Activated CD8-positive, alpha-beta T cell treated with anti-CD3 and anti-CD28 coated beads, Interleukin-2, amount 10 ng/mL, durations not matched to agents 7 days and 5 days (primary cell): ENCODE measurements at regions of chr11 and their contacts with region 1.

Region 1: GRCh38 chr11:16785520-16786128 is 47.2 kb downstream of the C11orf58 start:
- DNase-seq: peak; percentile 64
- ATAC-seq: peak; percentile 83
- H3K4me3 Mint-ChIP-seq: no peak overlapping the region
- H3K27ac Mint-ChIP-seq: no peak overlapping the region
- H3K4me1 Mint-ChIP-seq: no peaks in the 10 kb centered on the region
- H3K27me3 Mint-ChIP-seq: no peaks in the 10 kb centered on the region

Region 2: GRCh38 chr11:16722581-16723344 is 62.9 kb before region 1 on chr11:
- CTCF ChIA-PET with region 1: no interaction called
- POLR2A ChIA-PET with region 1: no interaction called
- DNase-seq: no peak
- ATAC-seq: no peak
- H3K4me3 Mint-ChIP-seq: no peak overlapping the region
- H3K27ac Mint-ChIP-seq: no peak overlapping the region
- H3K4me1 Mint-ChIP-seq: no peaks in the 10 kb centered on the region
- H3K27me3 Mint-ChIP-seq: no peaks in the 10 kb centered on the region

Region 3: GRCh38 chr11:16773981-16774935 is 11.4 kb before region 1 on chr11:
- CTCF ChIA-PET with region 1: interaction called, 10 read pairs
- POLR2A ChIA-PET with region 1: no interaction called
- DNase-seq: no peak
- ATAC-seq: no peak
- H3K4me3 Mint-ChIP-seq: no peak overlapping the region
- H3K27ac Mint-ChIP-seq: no peak overlapping the region
- H3K4me1 Mint-ChIP-seq: no peaks in the 10 kb centered on the region
- H3K27me3 Mint-ChIP-seq: no peaks in the 10 kb centered on the region

Region 4: DNA sequence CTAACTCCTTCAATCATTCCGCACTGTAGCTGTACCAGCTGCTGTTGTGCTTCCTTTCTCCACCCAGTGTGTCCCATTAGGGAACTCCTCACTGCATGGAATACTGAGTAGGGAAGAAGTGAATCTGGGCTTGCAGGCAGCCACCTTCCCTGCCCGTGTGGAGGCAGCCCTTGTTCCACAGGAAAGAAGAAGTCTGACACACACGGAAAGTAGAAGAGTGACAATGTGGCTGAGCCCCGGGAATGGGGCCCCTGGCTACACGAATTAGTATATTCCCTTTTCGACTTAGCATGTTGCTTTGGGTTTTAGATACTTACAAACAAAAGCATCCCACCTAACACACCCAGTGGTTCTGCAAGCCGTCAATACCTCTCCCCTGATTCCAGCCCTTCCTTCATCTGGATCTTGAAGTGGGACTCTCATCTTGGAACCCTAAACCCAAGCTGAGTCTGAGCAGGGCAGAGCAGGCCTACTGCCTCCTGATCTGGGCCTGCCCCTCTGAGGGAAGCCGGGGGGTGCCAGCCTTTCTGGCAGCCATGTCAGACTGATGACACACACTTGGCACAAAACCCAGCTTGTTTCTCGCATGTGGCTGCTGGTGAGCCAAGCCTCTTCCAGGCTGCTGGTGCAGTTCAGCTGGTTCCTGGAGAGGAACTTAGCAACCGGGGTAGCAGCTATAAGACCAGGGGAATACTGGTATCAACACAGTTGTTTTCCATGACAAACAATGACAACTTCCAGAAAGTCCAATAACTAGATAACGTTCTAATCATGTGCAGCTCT is 24.5 kb after region 1 on chr11:
- CTCF ChIA-PET with region 1: interaction called, 17 read pairs
- POLR2A ChIA-PET with region 1: no interaction called
- DNase-seq: no peak
- ATAC-seq: no peak
- H3K4me3 Mint-ChIP-seq: no peak overlapping the region
- H3K27ac Mint-ChIP-seq: no peak overlapping the region
- H3K4me1 Mint-ChIP-seq: peaks cover 3% of the 10 kb centered on the region
- H3K27me3 Mint-ChIP-seq: peaks cover 2% of the 10 kb centered on the region

Region 5: DNA sequence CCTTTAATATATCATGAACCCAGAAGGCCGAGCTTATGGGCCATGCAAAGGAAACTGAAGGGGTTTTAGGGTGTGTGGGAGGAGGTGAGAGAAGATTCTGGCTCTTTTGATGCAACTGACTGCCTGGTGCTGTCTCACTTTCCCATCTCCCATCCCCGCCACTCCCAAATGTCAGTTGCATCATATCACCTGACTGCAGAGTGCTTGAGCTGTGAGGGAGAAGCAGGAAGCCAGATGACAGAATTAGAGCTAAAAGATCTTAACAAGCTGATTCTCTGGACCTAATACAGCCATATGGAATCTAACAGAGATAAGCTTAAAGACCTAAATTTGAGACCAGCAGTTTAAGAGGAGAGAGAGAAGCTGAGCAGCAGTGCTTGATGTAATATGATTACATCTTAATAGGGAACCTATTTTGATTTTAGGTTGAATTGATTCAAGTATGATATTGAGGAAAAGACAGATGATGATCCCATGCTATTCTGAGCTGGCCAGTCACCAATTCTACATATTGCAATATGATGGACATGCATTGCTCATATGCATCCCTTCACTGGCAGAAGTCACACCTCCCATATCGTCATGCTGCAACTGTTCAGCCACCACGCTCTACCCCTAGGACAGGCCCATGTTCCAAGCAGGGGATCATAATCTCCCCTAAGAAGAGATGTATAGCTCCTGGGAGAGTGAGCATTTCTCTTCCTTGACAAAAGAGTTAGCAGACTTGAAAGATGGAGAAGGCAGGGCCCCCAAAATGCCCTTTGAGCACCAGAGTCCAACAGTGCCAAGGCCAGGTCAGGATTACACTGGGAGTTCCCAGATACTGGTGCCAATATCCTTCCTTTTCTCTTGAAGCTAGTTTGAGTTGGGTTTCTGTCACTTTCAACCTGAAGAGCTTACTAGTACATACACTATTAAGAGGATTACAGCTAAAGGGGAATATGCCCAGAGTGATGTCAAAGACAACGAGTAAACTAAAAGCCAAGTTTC is 183.7 kb after region 1 on chr11:
- CTCF ChIA-PET with region 1: no interaction called
- POLR2A ChIA-PET with region 1: no interaction called
- DNase-seq: no peak
- ATAC-seq: no peak
- H3K4me3 Mint-ChIP-seq: no peak overlapping the region
- H3K27ac Mint-ChIP-seq: no peak overlapping the region
- H3K4me1 Mint-ChIP-seq: no peaks in the 10 kb centered on the region
- H3K27me3 Mint-ChIP-seq: peaks cover 2% of the 10 kb centered on the region